Left lung (tissue), 14 donors: ENCODE measurements at regions of chr6 and their contacts with region 1.

Region 1: DNA sequence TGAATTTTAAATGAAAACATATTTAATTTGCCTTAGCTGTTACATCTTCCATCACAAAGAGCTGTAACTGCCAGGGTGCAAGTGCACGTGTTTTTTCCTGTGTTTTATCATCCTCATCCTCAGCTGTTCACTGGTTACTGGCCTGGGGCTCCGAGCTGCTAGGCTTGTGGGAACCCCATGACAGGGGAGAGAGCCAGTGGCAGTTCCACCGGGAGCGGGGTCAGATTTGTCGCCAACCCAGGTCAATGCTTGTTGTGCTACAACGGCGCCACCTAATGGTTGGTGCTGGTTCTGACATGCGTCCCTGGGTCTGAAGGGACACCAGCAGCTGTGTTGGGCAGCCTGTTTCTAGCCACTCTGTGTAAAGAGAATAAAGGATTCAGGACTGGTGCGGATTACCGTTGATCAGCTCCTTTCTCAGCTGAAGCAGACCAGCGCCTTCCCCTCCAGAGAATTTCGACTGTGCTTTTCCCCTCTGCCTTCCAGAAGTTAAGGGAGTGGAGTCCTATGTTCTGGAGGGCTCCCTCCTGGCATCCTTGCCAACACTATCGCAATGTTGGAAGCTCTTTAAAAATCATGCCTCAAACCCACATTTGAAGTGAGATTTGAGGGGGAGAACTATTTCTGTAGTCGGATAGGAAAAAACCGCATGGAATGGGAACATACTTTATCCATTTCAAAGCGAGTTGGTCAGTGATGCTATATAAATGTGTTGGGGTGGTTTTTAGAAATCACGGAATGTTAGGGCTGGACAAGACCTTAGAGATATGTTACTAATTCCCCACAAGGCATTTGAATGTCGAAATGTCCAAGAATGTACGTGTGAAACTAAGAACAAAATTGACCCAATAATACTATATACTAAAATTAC is 32.1 kb downstream of the SUMO4 start:
- DNase-seq: peak; percentile 76 to 91 (median 89)
- ATAC-seq: peak; percentile 98
- H3K4me3 ChIP-seq: no peak overlapping the region
- H3K27ac ChIP-seq: no peak overlapping the region
- H3K4me1 ChIP-seq: peaks cover 0 to 6% of the 10 kb centered on the region in 2 donors
- H3K27me3 ChIP-seq: no peaks in the 10 kb centered on the region
- CTCF ChIP-seq: peak; percentile 93 to 94

Region 2: DNA sequence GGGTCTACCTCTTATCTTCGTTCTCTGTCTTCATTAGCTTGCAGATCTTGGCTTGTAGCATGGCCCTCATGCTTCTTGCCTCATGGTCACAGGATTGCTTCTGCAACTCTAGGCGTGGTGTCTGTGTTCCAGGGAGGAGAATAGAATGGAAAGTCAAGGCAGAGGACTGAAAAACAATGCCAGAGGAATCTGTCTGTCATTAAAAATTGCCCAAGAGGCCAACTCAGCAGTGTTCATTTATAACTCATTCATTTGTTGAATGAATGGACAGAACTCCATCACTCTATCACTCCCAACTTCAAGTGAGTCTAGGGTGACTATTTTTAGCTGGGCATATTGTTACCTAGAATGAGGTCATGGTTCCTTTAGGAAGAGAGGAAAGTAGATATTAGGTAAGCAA is 505.7 kb before region 1 on chr6:
- intact Hi-C with region 1: no loop called
- DNase-seq: no peak
- ATAC-seq: no peak
- H3K4me3 ChIP-seq: no peak overlapping the region
- H3K27ac ChIP-seq: no peak overlapping the region
- H3K4me1 ChIP-seq: no peaks in the 10 kb centered on the region
- H3K27me3 ChIP-seq: no peaks in the 10 kb centered on the region
- CTCF ChIP-seq: no peak

Region 3: DNA sequence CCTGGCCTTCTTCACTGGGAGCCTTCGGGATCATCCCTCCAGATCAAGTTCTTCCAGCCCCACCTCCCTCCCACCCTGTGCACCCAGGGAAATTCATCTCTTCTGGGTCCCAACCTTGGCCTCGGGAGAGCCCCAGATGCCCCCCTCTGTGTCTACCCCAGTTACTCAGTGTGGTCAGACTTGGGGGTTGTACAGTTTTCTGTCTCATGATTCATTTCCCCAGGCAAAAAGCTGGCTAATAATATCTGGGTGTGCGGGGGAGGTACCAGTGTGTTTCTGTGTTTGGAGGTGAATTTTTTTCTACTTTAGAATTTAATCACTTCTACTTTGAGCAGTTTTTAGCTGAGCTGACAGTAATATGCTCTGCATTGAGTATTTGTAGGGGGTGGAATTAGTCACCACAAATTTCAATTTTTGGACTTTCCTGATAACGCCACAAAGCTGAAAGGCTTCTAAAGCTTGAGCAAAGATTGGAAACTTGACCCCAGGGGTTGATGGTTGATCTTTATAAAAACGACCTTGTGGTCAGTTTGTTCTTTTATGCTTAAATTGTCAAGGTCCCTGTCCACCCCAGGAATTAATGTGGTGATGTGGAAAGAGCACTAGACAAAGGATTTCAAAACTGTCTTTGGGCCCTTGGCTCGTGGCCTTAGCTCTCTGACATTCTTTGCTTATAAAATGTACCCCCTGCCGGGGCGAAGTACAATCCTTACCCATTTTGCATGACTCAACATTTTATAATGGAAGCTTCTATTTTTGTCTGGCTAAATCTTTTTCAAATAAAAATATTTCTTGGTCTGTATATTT is 399.3 kb before region 1 on chr6:
- intact Hi-C with region 1: loop called in 1 of 2 experiments (anchors 10 kb)
- DNase-seq: no peak
- ATAC-seq: peak; percentile 58
- H3K4me3 ChIP-seq: no peak overlapping the region
- H3K27ac ChIP-seq: no peak overlapping the region
- H3K4me1 ChIP-seq: peaks cover 5 to 6% of the 10 kb centered on the region in 2 donors
- H3K27me3 ChIP-seq: no peaks in the 10 kb centered on the region
- CTCF ChIP-seq: no peak

Region 4: DNA sequence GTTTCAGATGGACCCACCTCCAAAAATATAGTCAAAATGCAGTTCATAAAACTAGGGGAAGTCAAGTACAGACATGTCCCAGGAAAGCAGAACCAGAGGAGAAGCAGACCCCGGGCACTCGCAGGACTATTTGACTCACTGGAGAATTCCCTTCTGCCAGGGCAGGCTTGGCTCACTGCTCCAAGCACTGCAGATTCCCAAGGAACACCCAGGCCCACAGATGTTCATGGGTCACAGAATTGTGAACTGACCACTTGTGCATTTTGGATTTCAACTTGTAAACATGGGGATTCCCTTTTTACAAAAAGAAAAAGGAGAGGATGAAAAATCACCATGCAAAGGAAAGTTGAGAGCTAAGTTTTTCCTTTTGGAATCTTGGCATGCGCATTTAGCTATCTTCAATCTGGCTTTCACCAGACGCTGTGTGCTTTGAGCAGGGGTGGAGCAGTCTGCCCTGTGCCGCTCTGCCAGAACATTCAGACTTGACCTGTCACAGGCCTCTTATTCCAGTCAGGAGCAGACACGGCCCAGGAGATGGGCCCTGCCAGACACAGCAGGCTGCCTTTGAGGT is 352.1 kb before region 1 on chr6:
- intact Hi-C with region 1: loop called in 1 of 2 experiments (anchors 2 kb)
- DNase-seq: peak in 1 of 4 donors; percentile 42
- ATAC-seq: peak; percentile 63
- H3K4me3 ChIP-seq: no peak overlapping the region
- H3K27ac ChIP-seq: peak overlapping the region; percentile 2 to 48
- H3K4me1 ChIP-seq: peaks cover 0 to 12% of the 10 kb centered on the region in 2 donors
- H3K27me3 ChIP-seq: no peaks in the 10 kb centered on the region
- CTCF ChIP-seq: no peak

Region 5: GRCh38 chr6:149284904-149285303 is 147.2 kb before region 1 on chr6:
- intact Hi-C with region 1: no loop called
- DNase-seq: no peak
- ATAC-seq: no peak
- H3K4me3 ChIP-seq: no peak overlapping the region
- H3K27ac ChIP-seq: no peak overlapping the region
- H3K4me1 ChIP-seq: no peaks in the 10 kb centered on the region
- H3K27me3 ChIP-seq: no peaks in the 10 kb centered on the region
- CTCF ChIP-seq: no peak

Region 6: GRCh38 chr6:149513915-149514314 is 81.8 kb after region 1 on chr6:
- intact Hi-C with region 1: loop called in 1 of 2 experiments (anchors 10 kb)
- DNase-seq: no peak
- ATAC-seq: peak; percentile 47
- H3K4me3 ChIP-seq: no peak overlapping the region
- H3K27ac ChIP-seq: no peak overlapping the region
- H3K4me1 ChIP-seq: no peaks in the 10 kb centered on the region
- H3K27me3 ChIP-seq: no peaks in the 10 kb centered on the region
- CTCF ChIP-seq: no peak